ENCODE measurements at regions of chr11 and their contacts with region 1.

Region 1: DNA sequence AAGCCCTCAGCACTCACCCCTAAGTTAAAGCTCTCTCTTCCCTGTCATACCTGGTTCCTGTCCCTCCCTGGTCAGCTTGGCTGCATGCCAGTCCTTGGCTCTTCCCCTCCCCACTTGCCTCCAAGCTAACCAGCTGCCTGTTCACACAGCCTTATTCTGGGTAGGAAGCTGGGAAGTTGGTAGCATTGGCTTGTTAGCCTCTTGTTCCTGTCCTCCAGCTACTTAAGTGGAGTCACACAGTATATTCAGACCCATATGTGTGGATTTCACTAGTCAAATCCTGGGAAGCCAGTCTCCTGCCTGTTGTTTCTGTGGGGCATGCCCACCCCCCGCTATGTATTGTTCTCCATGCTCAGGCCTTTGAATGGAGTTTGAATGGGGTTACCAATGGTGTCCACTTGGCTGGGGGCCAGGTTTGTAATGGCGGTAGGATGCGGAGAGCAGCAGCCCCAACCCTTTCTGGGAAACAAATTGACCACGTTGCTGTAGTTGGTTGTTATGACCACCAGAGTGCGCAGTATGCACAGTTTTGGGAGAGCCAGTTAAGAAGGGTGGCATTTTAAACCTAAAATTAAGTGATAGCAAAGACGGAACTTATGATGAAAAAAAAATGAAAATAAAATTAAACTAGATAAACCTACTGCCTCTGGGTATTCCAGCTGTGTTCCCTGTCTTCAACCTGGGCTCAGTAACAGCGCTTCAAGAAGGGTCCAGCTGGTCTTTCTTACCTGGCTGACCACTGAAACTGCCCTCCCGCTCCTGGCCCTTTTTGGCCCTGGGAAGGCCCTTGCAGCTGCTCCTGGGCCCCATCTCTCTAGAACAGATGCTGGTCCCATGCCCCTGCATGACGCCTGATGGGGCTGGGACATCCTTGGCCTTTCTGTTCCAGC is 10.7 kb upstream of the RPS3 start:
- DNase-seq: peak; percentile 92
- H3K4me3 Mint-ChIP-seq: no peak overlapping the region
- H3K27ac Mint-ChIP-seq: no peak overlapping the region
- H3K4me1 Mint-ChIP-seq: peaks cover 10% of the 10 kb centered on the region
- H3K27me3 Mint-ChIP-seq: peaks cover 20% of the 10 kb centered on the region

Region 2: DNA sequence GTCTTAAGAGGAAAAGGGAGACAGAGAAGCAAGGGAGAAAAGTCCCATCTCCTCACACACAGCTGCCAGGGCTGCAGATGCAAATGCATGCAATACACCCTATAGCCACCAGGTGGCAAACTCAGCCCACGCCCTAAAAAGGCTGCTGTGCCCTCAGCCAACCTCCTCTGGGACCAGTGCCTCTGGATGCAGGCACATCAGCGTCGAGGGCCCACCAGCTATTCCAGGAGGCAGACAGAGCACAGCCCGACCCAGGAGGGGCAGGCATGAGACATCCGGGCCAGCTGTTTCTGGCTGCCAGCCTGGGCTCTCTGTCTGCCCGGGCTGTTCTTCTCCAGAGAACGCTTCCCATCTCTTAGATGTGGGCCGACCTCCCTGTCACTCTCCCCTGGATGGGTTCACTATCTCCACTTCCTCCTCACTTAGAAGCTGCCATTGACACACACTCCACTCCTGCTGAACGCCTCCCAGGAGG is 108.4 kb before region 1 on chr11:
- intact Hi-C with region 1: loop called (anchors 1 kb)
- DNase-seq: peak; percentile 94
- H3K4me3 Mint-ChIP-seq: no peak overlapping the region
- H3K27ac Mint-ChIP-seq: no peak overlapping the region
- H3K4me1 Mint-ChIP-seq: peaks cover 24% of the 10 kb centered on the region
- H3K27me3 Mint-ChIP-seq: no peaks in the 10 kb centered on the region

Region 3: DNA sequence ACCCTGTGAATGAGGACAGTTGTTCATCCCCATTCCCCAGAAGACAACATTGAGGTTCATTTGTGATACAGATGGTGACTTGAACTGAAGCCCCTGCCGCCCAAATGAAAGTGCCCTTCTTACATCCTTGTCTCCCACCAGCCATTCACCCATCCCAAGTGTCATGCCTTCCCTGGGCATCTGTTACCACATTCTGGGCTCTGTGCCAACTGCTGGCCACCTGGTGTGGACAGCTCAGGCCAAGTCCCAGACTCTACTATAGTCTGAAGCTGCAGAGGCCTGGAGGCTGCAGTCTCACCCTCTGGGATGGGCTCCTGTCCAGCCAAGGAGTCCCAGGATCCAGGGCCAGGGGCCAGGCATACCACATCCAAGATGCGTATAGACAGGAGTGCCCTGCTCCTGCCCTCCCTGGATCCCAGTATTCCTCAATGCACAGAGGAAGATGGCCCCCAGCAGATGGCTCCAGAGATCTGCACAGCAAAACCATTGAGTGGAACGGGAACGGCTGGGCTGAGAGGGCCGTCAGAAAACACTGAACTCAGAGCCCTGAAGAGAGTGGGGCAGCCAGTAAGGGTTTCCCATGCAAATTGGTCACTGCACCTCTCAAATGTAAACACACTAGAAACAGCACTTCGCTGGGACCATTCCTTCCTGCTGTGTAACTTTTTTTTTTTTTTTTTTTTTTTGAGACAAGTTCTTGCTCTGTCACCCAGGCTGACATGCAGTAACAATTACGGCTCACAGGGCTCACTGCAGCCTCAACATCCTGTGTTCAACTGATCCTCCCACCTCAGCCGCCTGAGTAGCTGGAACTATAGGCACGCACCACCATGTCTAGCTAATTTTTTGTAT is 60.0 kb before region 1 on chr11:
- intact Hi-C with region 1: loop called (anchors 1 kb)
- DNase-seq: peak; percentile 88
- H3K4me3 Mint-ChIP-seq: peak overlapping the region; percentile 67
- H3K27ac Mint-ChIP-seq: peak overlapping the region; percentile 77
- H3K4me1 Mint-ChIP-seq: peaks cover 56% of the 10 kb centered on the region
- H3K27me3 Mint-ChIP-seq: no peaks in the 10 kb centered on the region

Region 4: GRCh38 chr11:75351791-75352587 is 36.6 kb before region 1 on chr11:
- intact Hi-C with region 1: loop called (anchors 5 kb)
- DNase-seq: peak; percentile 91
- H3K4me3 Mint-ChIP-seq: peak overlapping the region; percentile 90
- H3K27ac Mint-ChIP-seq: peak overlapping the region; percentile 89
- H3K4me1 Mint-ChIP-seq: peaks cover 53% of the 10 kb centered on the region
- H3K27me3 Mint-ChIP-seq: no peaks in the 10 kb centered on the region

Region 5: GRCh38 chr11:75371941-75372789 is 16.5 kb before region 1 on chr11:
- intact Hi-C with region 1: no loop called
- DNase-seq: no peak
- H3K4me3 Mint-ChIP-seq: no peak overlapping the region
- H3K27ac Mint-ChIP-seq: no peak overlapping the region
- H3K4me1 Mint-ChIP-seq: peaks cover 15% of the 10 kb centered on the region
- H3K27me3 Mint-ChIP-seq: no peaks in the 10 kb centered on the region

Region 6: DNA sequence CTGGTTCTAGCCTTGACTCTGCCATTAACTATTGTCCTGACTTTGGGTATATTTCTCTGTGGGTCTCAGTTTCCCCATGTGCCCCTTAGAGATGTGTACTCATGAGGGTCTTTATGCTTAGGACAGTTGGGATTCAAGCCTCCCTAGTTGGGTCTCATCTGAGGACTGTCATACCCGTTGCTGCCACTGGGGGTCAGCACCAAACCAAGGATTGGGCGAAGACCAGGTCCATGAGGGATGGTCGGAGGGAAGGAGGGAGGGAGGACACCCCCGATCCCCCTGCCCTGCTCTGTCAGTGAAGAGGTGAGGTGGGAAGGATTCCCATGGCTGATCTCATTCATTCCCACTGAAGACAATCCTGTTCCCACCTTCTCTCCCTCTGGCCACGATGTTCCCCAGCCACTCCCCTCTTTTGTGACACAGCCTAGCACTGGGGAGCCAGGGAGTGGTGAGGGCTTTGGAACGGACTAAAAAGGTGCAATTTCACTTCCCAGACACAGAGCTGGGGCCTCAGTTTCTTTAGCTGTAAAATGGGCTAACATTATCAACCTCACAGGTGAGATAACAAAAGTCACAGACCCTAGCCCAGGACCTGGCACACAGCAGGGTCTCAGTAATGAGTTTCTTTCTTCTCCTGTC is 56.8 kb after region 1 on chr11:
- intact Hi-C with region 1: loop called (anchors 2 kb)
- DNase-seq: peak; percentile 92
- H3K4me3 Mint-ChIP-seq: no peak overlapping the region
- H3K27ac Mint-ChIP-seq: no peak overlapping the region
- H3K4me1 Mint-ChIP-seq: no peaks in the 10 kb centered on the region
- H3K27me3 Mint-ChIP-seq: peaks cover 2% of the 10 kb centered on the region

Region 7: GRCh38 chr11:75532200-75533048 is 143.8 kb after region 1 on chr11:
- intact Hi-C with region 1: loop called (anchors 1 kb)
- DNase-seq: peak; percentile 95
- H3K4me3 Mint-ChIP-seq: peak overlapping the region; percentile 31
- H3K27ac Mint-ChIP-seq: no peak overlapping the region
- H3K4me1 Mint-ChIP-seq: peaks cover 30% of the 10 kb centered on the region
- H3K27me3 Mint-ChIP-seq: peaks cover 11% of the 10 kb centered on the region

Measured in activated CD4-positive, alpha-beta T cell treated with anti-CD3 and anti-CD28 coated beads, Interleukin-2, amount 10 ng/mL, durations not matched to agents 24 days and 14 days (primary cell).